CD4-positive, alpha-beta T cell (primary cell): ENCODE measurements at regions of chr2 and their contacts with region 1.

Region 1: DNA sequence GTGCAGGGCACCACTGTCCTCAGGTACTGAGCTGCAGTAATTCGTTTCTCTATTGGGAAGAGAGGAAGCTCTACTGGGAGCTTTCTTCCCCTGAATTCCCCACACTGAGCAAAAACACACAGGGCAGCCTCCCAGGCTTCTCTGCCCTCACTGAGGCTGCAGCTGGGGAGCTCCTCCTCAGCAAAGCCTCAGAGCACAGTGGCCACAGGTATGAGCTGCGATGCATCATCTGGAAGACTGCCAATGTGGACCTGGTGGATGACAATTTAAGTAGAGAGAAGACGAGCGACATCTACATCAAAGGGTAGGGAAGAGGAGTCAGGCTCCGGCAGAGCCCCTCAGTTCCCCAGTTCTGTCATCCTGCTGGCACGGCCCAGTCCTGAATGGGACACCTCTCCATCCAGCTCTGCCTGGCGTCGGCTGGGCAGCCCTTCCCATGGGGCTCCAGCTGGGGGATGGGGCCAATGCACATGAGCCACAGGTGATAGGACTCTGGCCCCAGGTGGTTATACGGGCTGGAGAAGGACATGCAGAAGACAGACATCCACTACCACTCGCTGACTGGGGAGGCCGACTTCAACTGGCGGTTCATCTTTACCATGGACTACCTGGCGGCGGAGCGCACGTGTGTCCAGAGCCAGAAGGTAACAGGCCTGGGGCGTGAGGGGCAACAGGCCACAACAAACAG is 37.6 kb downstream of the LMAN2L start:
- DNase-seq: peak in 1 of 14 experiments; percentile 17
- ATAC-seq: no peak
- H3K4me3 ChIP-seq: no peak overlapping the region
- H3K4me3 Mint-ChIP-seq: no peak overlapping the region
- H3K27ac ChIP-seq: no peak overlapping the region
- H3K27ac Mint-ChIP-seq: no peak overlapping the region
- H3K4me1 ChIP-seq: no peaks in the 10 kb centered on the region
- H3K4me1 Mint-ChIP-seq: no peaks in the 10 kb centered on the region
- H3K27me3 ChIP-seq: no peaks in the 10 kb centered on the region
- H3K27me3 Mint-ChIP-seq: no peaks in the 10 kb centered on the region
- CTCF ChIP-seq: no peak

Region 2: GRCh38 chr2:96523659-96524481 is 178.4 kb before region 1 on chr2:
- CTCF ChIA-PET with region 1: no interaction called
- POLR2A ChIA-PET with region 1: no interaction called
- intact Hi-C with region 1: no loop called
- DNase-seq: peak in 1 of 14 experiments; percentile 37
- ATAC-seq: no peak
- H3K4me3 ChIP-seq: no peak overlapping the region
- H3K4me3 Mint-ChIP-seq: peak overlapping the region; percentile 51
- H3K27ac ChIP-seq: no peak overlapping the region
- H3K27ac Mint-ChIP-seq: no peak overlapping the region
- H3K4me1 ChIP-seq: peaks cover 54% of the 10 kb centered on the region
- H3K4me1 Mint-ChIP-seq: peaks cover 29% of the 10 kb centered on the region
- H3K27me3 ChIP-seq: no peaks in the 10 kb centered on the region
- H3K27me3 Mint-ChIP-seq: no peaks in the 10 kb centered on the region
- CTCF ChIP-seq: no peak

Region 3: DNA sequence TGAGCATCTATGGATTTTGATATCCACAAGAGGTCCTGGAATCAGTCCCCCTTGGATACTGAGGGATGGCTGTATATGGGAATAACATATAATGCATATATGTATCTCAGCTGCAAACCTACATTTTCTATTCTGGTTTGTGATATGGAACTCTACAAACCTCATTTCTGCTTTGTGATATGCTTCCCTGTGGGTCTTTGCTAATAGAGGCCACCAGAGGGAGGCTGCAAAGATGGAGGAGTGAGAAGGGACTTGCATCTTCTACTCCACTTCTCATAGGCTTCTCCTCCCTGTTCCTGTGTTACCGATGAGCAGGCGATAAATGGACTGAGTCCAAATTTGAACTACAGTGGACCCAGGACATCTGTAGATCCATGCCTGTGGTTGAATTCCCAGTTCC is 127.9 kb before region 1 on chr2:
- CTCF ChIA-PET with region 1: no interaction called
- POLR2A ChIA-PET with region 1: no interaction called
- intact Hi-C with region 1: loop called in 1 of 2 experiments (anchors 10 kb)
- DNase-seq: no peak
- ATAC-seq: no peak
- H3K4me3 ChIP-seq: no peak overlapping the region
- H3K4me3 Mint-ChIP-seq: no peak overlapping the region
- H3K27ac ChIP-seq: no peak overlapping the region
- H3K27ac Mint-ChIP-seq: no peak overlapping the region
- H3K4me1 ChIP-seq: no peaks in the 10 kb centered on the region
- H3K4me1 Mint-ChIP-seq: no peaks in the 10 kb centered on the region
- H3K27me3 ChIP-seq: no peaks in the 10 kb centered on the region
- H3K27me3 Mint-ChIP-seq: no peaks in the 10 kb centered on the region
- CTCF ChIP-seq: no peak

Region 4: GRCh38 chr2:96656540-96656939 is 45.7 kb before region 1 on chr2:
- CTCF ChIA-PET with region 1: no interaction called
- POLR2A ChIA-PET with region 1: no interaction called
- intact Hi-C with region 1: loop called in 1 of 2 experiments (anchors 5 kb)
- DNase-seq: no peak
- ATAC-seq: no peak
- H3K4me3 ChIP-seq: no peak overlapping the region
- H3K4me3 Mint-ChIP-seq: no peak overlapping the region
- H3K27ac ChIP-seq: no peak overlapping the region
- H3K27ac Mint-ChIP-seq: no peak overlapping the region
- H3K4me1 ChIP-seq: peaks cover 2% of the 10 kb centered on the region
- H3K4me1 Mint-ChIP-seq: no peaks in the 10 kb centered on the region
- H3K27me3 ChIP-seq: no peaks in the 10 kb centered on the region
- H3K27me3 Mint-ChIP-seq: peaks cover 5% of the 10 kb centered on the region
- CTCF ChIP-seq: no peak

Region 5: GRCh38 chr2:96715658-96716057 is 13.4 kb after region 1 on chr2:
- CTCF ChIA-PET with region 1: no interaction called
- POLR2A ChIA-PET with region 1: no interaction called
- intact Hi-C with region 1: no loop called
- DNase-seq: no peak
- ATAC-seq: no peak
- H3K4me3 ChIP-seq: no peak overlapping the region
- H3K4me3 Mint-ChIP-seq: no peak overlapping the region
- H3K27ac ChIP-seq: no peak overlapping the region
- H3K27ac Mint-ChIP-seq: no peak overlapping the region
- H3K4me1 ChIP-seq: no peaks in the 10 kb centered on the region
- H3K4me1 Mint-ChIP-seq: no peaks in the 10 kb centered on the region
- H3K27me3 ChIP-seq: no peaks in the 10 kb centered on the region
- H3K27me3 Mint-ChIP-seq: no peaks in the 10 kb centered on the region
- CTCF ChIP-seq: no peak